Activated naive CD4-positive, alpha-beta T cell treated with anti-CD3 and anti-CD28 coated beads, Interleukin-2, amount 10 ng/mL, durations not matched to agents 7 days and 5 days (primary cell): ENCODE measurements at regions of chr6 and their contacts with region 1.

Region 1: DNA sequence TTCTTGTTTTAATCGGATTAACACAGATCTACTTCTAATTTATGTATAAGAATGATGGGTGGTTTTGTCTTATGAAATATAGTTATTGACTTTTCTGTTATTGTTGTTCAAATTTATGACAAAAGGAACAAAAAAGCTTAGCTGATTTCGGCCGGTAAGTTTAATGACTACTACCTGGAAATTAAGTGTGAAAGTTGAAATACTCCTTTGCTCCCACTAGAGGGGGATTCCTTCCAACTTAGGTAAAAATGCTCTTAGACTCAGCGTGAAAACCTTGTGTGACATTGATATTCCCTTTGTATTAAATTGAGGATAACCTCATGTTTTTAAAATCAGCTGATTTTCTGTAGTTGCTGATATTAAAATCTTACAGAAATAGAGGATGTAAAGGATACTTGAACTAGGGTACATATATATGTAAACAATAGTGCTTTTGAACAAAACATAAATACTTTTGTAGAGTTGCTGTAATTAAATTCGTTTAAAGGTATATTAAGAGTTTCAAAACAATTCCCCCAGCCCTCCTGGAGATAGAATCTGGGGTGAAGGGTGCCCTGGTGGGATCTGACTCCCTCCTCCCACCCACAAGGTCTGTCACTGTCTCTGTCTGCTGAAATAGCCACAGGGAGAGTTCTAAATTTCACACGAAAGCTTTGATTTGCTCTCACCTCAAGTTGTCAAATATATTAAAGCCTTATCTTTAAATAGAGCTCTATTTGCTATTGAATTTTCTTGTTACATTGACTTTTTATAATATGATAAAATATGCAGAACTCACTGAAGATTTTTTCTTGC is 257.5 kb downstream of the ARID1B start:
- DNase-seq: no peak
- H3K4me3 Mint-ChIP-seq: peak overlapping the region; percentile 54
- H3K27ac Mint-ChIP-seq: peak overlapping the region; percentile 13
- H3K4me1 Mint-ChIP-seq: peaks cover 19% of the 10 kb centered on the region
- H3K27me3 Mint-ChIP-seq: no peaks in the 10 kb centered on the region

Region 2: DNA sequence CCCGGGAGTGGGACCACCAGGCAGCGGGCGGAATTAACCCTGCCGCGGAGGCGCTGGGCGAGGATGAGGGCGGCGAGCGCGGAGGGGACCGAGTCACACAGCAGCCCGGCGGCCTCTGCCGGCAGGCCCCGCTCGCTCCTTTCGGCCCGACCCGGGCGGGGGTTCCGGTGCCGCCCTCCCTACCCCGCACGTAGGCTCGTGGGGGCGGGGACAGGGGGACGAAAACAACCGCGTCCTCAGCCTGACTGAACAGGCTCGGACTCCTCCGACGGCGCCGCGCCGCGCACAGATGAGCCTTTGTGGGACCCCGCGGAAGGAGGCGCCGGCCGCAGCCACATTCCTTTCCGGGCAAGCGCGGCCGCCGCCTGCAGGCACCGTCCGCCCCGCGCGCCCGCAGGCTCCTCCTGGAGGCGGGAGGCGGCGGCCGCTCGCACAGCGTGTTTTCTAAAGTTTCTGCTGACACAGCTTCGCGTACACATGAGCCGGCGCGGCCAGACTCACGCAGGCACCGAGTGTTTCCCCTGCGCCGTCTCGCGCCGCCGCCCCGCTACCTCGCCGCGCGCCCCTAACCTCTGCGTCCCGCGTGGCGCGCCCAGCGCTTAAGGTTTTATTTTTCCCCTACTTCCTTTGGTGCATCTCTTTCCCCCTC is 13.2 kb before region 1 on chr6:
- CTCF ChIA-PET with region 1: interaction called, 11 read pairs
- DNase-seq: peak; percentile 93
- H3K4me3 Mint-ChIP-seq: peak overlapping the region; percentile 90
- H3K27ac Mint-ChIP-seq: peak overlapping the region; percentile 99
- H3K4me1 Mint-ChIP-seq: peaks cover 42% of the 10 kb centered on the region
- H3K27me3 Mint-ChIP-seq: no peaks in the 10 kb centered on the region

Region 3: GRCh38 chr6:157045831-157046454 is 11.3 kb after region 1 on chr6:
- CTCF ChIA-PET with region 1: interaction called, 17 read pairs
- DNase-seq: no peak
- H3K4me3 Mint-ChIP-seq: no peak overlapping the region
- H3K27ac Mint-ChIP-seq: no peak overlapping the region
- H3K4me1 Mint-ChIP-seq: no peaks in the 10 kb centered on the region
- H3K27me3 Mint-ChIP-seq: no peaks in the 10 kb centered on the region

Region 4: GRCh38 chr6:157068691-157069324 is 34.2 kb after region 1 on chr6:
- CTCF ChIA-PET with region 1: interaction called, 10 read pairs
- DNase-seq: no peak
- H3K4me3 Mint-ChIP-seq: no peak overlapping the region
- H3K27ac Mint-ChIP-seq: peak overlapping the region; percentile 8
- H3K4me1 Mint-ChIP-seq: peaks cover 27% of the 10 kb centered on the region
- H3K27me3 Mint-ChIP-seq: no peaks in the 10 kb centered on the region

Region 5: GRCh38 chr6:157184202-157185020 is 149.8 kb after region 1 on chr6:
- CTCF ChIA-PET with region 1: interaction called, 49 read pairs
- DNase-seq: peak; percentile 74
- H3K4me3 Mint-ChIP-seq: no peak overlapping the region
- H3K27ac Mint-ChIP-seq: no peak overlapping the region
- H3K4me1 Mint-ChIP-seq: peaks cover 19% of the 10 kb centered on the region
- H3K27me3 Mint-ChIP-seq: no peaks in the 10 kb centered on the region